ENCODE measurements at regions of chr16 and their contacts with region 1.

Region 1: GRCh38 chr16:1509307-1510221 is 16.4 kb downstream of the TELO2 start:
- DNase-seq: peak; percentile 90

Region 2: GRCh38 chr16:1533443-1533951 is 23.9 kb after region 1 on chr16 and contains the start of gene TMEM204:
- intact Hi-C with region 1: loop called (anchors 2 kb)
- DNase-seq: peak; percentile 88
- total RNA-seq, gene TMEM204: 19.8 TPM

Region 3: GRCh38 chr16:1553946-1554825 is 44.6 kb after region 1 on chr16:
- intact Hi-C with region 1: loop called (anchors 5 kb)
- DNase-seq: no peak

Measured in cardiac septum (tissue), 1 donor.